CD14-positive monocyte (primary cell): ENCODE measurements at regions of chr11 and their contacts with region 1.

Region 1: DNA sequence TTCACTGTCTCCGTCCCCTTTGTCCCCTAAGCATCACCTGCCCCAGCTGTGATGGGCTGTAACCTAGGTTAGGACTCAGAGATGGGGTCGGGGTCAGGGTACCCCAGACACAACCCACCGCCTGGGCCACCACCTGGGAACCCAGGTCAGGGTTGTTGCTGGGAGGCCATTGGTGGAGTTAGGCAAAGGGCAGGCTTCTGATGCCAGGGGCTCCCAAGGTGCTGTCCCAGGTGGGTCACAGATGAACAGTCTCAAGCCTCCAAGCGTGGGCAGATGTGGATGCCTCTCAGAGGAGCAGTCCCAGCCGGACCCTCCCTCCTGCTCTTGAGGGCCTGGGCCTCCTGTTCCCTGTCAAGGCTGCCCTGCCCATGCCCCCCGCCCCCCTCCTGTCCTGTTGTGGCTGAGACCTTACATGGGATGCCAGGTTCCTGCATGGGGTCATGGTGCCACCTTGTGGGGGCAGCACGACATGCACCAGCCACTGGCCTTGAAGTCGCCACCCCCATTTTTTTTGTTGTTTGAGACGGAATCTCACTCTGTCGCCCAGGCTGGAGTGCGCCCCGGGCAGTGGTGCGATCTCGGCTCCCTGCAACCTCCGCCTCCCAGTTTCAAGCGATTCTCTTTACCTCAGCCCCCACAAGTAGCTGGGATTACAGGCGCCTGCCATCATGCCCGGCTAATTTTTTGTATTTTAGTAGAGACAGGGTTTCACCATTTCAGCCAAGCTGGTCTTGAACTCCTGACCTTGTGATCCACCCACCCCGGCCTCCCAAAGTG is 12.1 kb downstream of the GATD1 start:
- DNase-seq: peak; percentile 49 to 65 (median 52)
- H3K4me3 ChIP-seq: no peak overlapping the region
- H3K4me3 Mint-ChIP-seq: no peak overlapping the region
- H3K27ac ChIP-seq: no peak overlapping the region
- H3K27ac Mint-ChIP-seq: peak overlapping the region in 5 of 7 donors; percentile 33 to 87 (median 63)
- H3K4me1 ChIP-seq: no peaks in the 10 kb centered on the region
- H3K4me1 Mint-ChIP-seq: peaks cover 9% of the 10 kb centered on the region
- H3K27me3 ChIP-seq: no peaks in the 10 kb centered on the region
- H3K27me3 Mint-ChIP-seq: no peaks in the 10 kb centered on the region
- CTCF ChIP-seq: peak; percentile 76

Region 2: DNA sequence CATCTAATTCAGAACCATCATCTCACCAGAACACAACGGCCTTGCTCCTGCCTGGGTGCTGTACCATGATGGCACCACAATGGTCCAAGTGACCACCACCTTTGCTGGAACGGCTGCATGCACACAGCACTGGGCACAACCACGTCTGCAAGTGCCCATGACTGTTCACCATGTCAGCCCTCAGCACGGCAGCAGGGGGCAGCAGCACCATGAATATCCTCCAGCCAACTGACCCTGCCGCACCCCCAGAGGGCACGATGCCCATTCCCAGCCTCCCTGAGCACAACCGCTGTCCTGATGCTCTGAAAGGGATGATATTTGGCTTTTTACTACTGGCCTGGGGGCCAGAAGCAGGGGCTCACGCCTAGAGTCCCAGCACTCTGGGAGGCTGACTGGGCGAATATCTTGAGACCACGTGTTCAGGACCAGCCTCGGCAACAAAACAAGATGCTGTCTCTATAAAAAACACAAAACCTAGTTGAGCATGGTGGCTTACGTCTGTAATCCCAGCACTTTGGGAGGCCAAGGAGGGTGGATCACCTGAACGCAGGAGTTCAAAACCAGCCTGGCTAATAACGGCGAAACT is 102.4 kb before region 1 on chr11:
- intact Hi-C with region 1: loop called in 1 of 2 experiments (anchors 2 kb)
- DNase-seq: peak; percentile 46 to 57 (median 48)
- H3K4me3 ChIP-seq: no peak overlapping the region
- H3K4me3 Mint-ChIP-seq: no peak overlapping the region
- H3K27ac ChIP-seq: no peak overlapping the region
- H3K27ac Mint-ChIP-seq: peak overlapping the region in 1 of 7 donors; percentile 30
- H3K4me1 ChIP-seq: no peaks in the 10 kb centered on the region
- H3K4me1 Mint-ChIP-seq: peaks cover 5% of the 10 kb centered on the region
- H3K27me3 ChIP-seq: no peaks in the 10 kb centered on the region
- H3K27me3 Mint-ChIP-seq: peaks cover 2 to 4% (median 3%) of the 10 kb centered on the region in 3 donors
- CTCF ChIP-seq: peak; percentile 85

Region 3: GRCh38 chr11:809287-810039 is 44.2 kb after region 1 on chr11 and contains the start of gene RPLP2:
- intact Hi-C with region 1: no loop called
- DNase-seq: peak; percentile 97 to 98 (median 98)
- H3K4me3 ChIP-seq: peak within 1 kb of the TSS; percentile 79 to 96 (median 91)
- H3K4me3 Mint-ChIP-seq: peak within 1 kb of the TSS; percentile 93 to 95
- H3K27ac ChIP-seq: peak within 1 kb of the TSS; percentile 89 to 97
- H3K27ac Mint-ChIP-seq: peak within 1 kb of the TSS; percentile 96 to 100 (median 98)
- H3K4me1 ChIP-seq: peaks cover 33 to 40% of the 10 kb centered on the region in 2 donors
- H3K4me1 Mint-ChIP-seq: peaks cover 40% of the 10 kb centered on the region
- H3K27me3 ChIP-seq: no peaks in the 10 kb centered on the region
- H3K27me3 Mint-ChIP-seq: peaks cover 0 to under 1% (median 0%) of the 10 kb centered on the region in 3 donors
- CTCF ChIP-seq: no peak
- polyA plus RNA-seq, gene RPLP2: 879 to 1,191 (median 990) TPM

Region 4: GRCh38 chr11:1050581-1051355 is 285.6 kb after region 1 on chr11:
- intact Hi-C with region 1: no loop called
- DNase-seq: peak; percentile 31 to 41 (median 36)
- H3K4me3 ChIP-seq: no peak overlapping the region
- H3K4me3 Mint-ChIP-seq: no peak overlapping the region
- H3K27ac ChIP-seq: no peak overlapping the region
- H3K27ac Mint-ChIP-seq: no peak overlapping the region
- H3K4me1 ChIP-seq: no peaks in the 10 kb centered on the region
- H3K4me1 Mint-ChIP-seq: peaks cover 7% of the 10 kb centered on the region
- H3K27me3 ChIP-seq: peaks cover 0 to 6% of the 10 kb centered on the region in 2 donors
- H3K27me3 Mint-ChIP-seq: peaks cover 17 to 27% (median 23%) of the 10 kb centered on the region in 3 donors
- CTCF ChIP-seq: peak; percentile 78